IMR-90 (cell line): ENCODE measurements at regions of chr5 and their contacts with region 1.

Region 1: DNA sequence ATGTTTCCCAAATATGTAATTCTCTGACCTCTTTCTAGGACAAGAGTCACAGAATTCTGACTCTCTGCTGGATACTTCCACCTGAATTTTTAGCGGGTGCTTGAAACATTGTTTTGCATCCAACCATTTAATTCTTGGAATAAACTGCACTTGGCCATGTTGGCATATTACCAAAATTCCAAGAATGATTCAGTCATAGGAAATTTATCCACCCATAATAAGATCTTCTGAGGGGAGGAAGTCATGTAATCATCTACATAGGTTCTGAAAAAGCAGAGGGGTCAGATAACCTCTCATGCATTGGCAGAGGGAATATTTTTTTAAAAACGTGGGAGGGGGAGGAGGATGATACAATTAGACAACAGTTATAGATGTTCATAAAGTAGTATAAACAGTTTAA is 156.9 kb downstream of the PAM start:
- DNase-seq: peak; percentile 79
- ATAC-seq: peak; percentile 83
- H3K4me3 ChIP-seq: no peak overlapping the region
- H3K27ac ChIP-seq: no peak overlapping the region
- H3K4me1 ChIP-seq: peaks cover 8% of the 10 kb centered on the region
- H3K27me3 ChIP-seq: no peaks in the 10 kb centered on the region
- CTCF ChIP-seq: no peak
- POLR2A ChIP-seq: no peak
- RAD21 ChIP-seq: no peak

Region 2: DNA sequence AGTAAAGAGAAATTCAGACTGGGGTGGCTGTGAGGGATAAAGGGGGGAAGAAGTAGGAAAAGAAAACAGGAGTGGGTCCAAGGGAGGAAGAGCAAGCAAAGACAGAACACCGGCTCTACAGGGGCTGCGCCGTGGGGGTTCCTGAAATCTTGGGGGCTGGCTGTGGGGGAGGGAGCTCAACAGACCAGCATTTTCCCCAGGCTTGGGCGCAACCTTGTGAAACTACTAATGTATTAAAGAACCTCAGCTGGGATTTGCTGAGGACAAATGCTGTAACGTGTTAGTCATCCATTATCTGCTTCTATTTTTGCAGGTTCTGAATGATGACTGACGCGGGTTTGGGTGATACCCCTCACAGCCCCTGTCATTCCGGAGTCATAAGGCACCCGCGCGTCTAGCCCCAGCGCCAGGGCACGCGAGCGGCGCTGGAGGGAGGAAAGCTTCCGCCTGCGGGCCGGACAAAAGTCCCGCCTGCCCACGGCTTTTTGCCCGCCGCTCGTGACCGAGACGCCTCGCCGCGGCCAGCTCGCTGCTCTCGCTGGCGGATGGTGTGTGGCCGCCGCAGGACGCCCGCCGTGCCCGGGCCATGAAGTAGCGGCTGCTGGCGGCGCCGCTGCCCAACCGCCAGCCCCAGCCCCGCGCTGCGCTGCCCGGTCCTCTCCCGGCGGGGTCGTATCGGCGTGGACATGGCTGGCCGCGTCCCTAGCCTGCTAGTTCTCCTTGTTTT is 46.3 kb before region 1 on chr5:
- CTCF ChIA-PET with region 1: no interaction called
- POLR2A ChIA-PET with region 1: no interaction called
- dilution Hi-C with region 1: no loop called
- in situ Hi-C with region 1: no loop called
- intact Hi-C with region 1: no loop called
- DNase-seq: peak; percentile 88
- ATAC-seq: peak; percentile 83
- H3K4me3 ChIP-seq: peak overlapping the region; percentile 56
- H3K27ac ChIP-seq: peak overlapping the region; percentile 79
- H3K4me1 ChIP-seq: peaks cover 2% of the 10 kb centered on the region
- H3K27me3 ChIP-seq: no peaks in the 10 kb centered on the region
- CTCF ChIP-seq: no peak
- POLR2A ChIP-seq: peak; percentile 82
- RAD21 ChIP-seq: no peak

Region 3: GRCh38 chr5:102895976-102896375 is 16.0 kb before region 1 on chr5:
- CTCF ChIA-PET with region 1: interaction called, 3 read pairs
- POLR2A ChIA-PET with region 1: no interaction called
- dilution Hi-C with region 1: no loop called
- in situ Hi-C with region 1: no loop called
- intact Hi-C with region 1: loop called (anchors 1 kb)
- DNase-seq: no peak
- ATAC-seq: no peak
- H3K4me3 ChIP-seq: no peak overlapping the region
- H3K27ac ChIP-seq: no peak overlapping the region
- H3K4me1 ChIP-seq: no peaks in the 10 kb centered on the region
- H3K27me3 ChIP-seq: no peaks in the 10 kb centered on the region
- CTCF ChIP-seq: no peak
- POLR2A ChIP-seq: no peak
- RAD21 ChIP-seq: no peak

Region 4: DNA sequence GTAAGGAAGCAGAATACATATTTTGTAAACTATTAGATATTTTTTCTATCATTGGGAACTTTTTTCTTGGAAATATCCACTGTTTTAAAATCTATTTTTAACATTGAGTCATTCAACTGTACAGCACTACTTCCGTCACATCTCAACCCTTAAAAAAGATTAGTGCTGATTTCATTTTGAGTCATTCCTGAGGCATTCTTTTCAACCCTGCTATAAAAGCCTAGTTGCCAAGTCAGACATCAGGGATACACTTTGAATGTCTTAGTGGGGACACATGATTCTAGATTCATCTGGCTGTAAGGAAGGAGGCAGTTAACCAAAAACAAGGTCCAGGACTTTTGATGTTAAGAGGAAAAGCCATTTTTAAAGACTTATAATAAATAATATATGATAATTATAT is 47.1 kb after region 1 on chr5:
- CTCF ChIA-PET with region 1: no interaction called
- POLR2A ChIA-PET with region 1: no interaction called
- dilution Hi-C with region 1: no loop called
- in situ Hi-C with region 1: no loop called
- intact Hi-C with region 1: loop called (anchors 5 kb)
- DNase-seq: peak; percentile 95
- ATAC-seq: peak; percentile 96
- H3K4me3 ChIP-seq: no peak overlapping the region
- H3K27ac ChIP-seq: no peak overlapping the region
- H3K4me1 ChIP-seq: peaks cover 4% of the 10 kb centered on the region; the same call in 1 of the 2 replicates
- H3K27me3 ChIP-seq: no peaks in the 10 kb centered on the region
- CTCF ChIP-seq: no peak
- POLR2A ChIP-seq: peak; percentile 66
- RAD21 ChIP-seq: no peak